IMR-90 (cell line): ENCODE measurements at regions of chr16 and their contacts with region 1.

Region 1: DNA sequence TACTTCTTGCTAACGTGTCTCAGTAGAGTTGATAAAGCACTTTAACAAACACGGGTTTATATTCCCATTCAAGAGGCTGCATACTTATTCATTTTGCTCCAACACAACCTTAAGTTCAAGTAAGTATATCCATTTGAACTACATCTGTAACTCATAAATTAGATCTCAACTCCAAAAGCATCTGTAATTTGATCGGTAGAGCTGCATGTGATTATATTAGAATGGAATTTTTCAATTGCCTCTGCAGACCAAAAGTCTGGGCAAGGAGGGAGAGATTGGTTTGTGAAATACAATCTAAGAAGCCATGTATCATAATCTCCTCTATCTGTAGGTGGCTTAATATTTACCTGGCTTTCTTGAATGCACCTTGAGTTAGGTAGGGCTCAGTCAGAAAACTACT is 371.0 kb downstream of the RBFOX1 start:
- DNase-seq: no peak
- ATAC-seq: no peak
- H3K4me3 ChIP-seq: no peak overlapping the region
- H3K27ac ChIP-seq: no peak overlapping the region
- H3K4me1 ChIP-seq: no peaks in the 10 kb centered on the region
- H3K27me3 ChIP-seq: no peaks in the 10 kb centered on the region
- CTCF ChIP-seq: no peak
- POLR2A ChIP-seq: no peak
- RAD21 ChIP-seq: no peak

Region 2: GRCh38 chr16:6573577-6573976 is 1130.1 kb before region 1 on chr16:
- CTCF ChIA-PET with region 1: no interaction called
- POLR2A ChIA-PET with region 1: no interaction called
- dilution Hi-C with region 1: no loop called
- in situ Hi-C with region 1: no loop called
- intact Hi-C with region 1: no loop called
- DNase-seq: no peak
- ATAC-seq: no peak
- H3K4me3 ChIP-seq: no peak overlapping the region
- H3K27ac ChIP-seq: no peak overlapping the region
- H3K4me1 ChIP-seq: no peaks in the 10 kb centered on the region
- H3K27me3 ChIP-seq: no peaks in the 10 kb centered on the region
- CTCF ChIP-seq: no peak
- POLR2A ChIP-seq: no peak
- RAD21 ChIP-seq: no peak

Region 3: DNA sequence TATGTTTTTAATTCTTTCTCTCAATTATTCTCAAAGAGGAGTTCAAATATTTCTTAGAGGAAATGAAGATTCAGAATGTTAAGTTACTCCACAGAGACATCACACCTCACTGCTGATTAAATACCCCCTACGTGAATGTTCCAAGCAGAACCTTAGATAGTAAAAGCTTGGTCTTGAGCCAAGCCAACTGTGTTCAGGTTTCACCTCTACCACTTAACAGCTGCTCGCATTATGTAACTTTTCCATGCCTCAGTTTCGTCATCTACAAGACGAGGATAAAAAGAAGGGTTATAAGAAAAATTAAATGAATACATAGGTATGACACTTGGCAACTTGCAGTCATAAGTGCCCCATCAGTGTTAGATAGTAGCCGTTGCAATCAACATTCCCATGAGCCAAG is 14.9 kb before region 1 on chr16:
- CTCF ChIA-PET with region 1: no interaction called
- POLR2A ChIA-PET with region 1: no interaction called
- dilution Hi-C with region 1: no loop called
- in situ Hi-C with region 1: no loop called
- intact Hi-C with region 1: no loop called
- DNase-seq: no peak
- ATAC-seq: no peak
- H3K4me3 ChIP-seq: no peak overlapping the region
- H3K27ac ChIP-seq: no peak overlapping the region
- H3K4me1 ChIP-seq: no peaks in the 10 kb centered on the region
- H3K27me3 ChIP-seq: no peaks in the 10 kb centered on the region
- CTCF ChIP-seq: no peak
- POLR2A ChIP-seq: no peak
- RAD21 ChIP-seq: no peak

Region 4: DNA sequence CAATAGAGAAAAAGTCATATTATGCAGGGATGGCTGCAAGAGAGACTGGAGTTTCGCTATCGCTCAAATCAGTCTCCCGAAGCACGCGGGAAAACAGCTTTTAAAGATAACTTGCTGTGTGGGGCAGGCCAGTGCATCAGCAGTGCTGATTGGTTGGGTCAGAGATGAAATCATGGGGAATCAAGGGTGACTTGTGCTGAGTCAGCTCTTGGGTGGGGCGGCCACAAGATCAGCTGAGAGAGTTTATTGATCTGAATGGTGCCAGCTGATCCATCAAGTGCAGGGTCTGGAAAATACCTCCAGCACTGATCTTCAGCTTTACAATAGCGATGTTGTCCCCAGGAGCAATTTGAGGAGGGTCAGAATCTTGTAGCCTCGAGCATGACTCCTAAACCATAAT is 59.4 kb after region 1 on chr16:
- CTCF ChIA-PET with region 1: no interaction called
- POLR2A ChIA-PET with region 1: no interaction called
- dilution Hi-C with region 1: no loop called
- in situ Hi-C with region 1: loop called (anchors 10 kb)
- intact Hi-C with region 1: no loop called
- DNase-seq: no peak
- ATAC-seq: no peak
- H3K4me3 ChIP-seq: no peak overlapping the region
- H3K27ac ChIP-seq: no peak overlapping the region
- H3K4me1 ChIP-seq: no peaks in the 10 kb centered on the region
- H3K27me3 ChIP-seq: no peaks in the 10 kb centered on the region
- CTCF ChIP-seq: no peak
- POLR2A ChIP-seq: no peak
- RAD21 ChIP-seq: no peak

Region 5: DNA sequence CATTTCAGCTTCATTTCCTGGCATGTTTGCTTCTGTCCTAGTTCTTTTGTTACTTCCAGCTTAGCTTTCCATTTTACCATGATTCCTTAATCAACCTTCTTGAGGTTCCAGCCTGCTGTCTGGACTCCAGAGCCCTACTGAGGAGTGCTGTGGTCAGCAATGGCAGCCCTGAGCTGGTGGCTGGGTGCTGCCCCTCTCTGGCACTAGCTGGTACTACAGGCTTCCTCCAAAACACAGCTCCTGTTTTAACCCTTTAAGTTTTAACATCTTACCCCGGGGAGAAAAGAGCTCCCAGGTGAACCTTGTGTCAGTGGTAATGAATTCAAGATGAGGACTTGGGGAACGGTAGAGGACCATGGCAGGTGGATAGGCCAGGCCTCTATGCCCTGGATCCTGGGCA is 491.1 kb after region 1 on chr16:
- CTCF ChIA-PET with region 1: no interaction called
- POLR2A ChIA-PET with region 1: no interaction called
- dilution Hi-C with region 1: no loop called
- in situ Hi-C with region 1: no loop called
- intact Hi-C with region 1: no loop called
- DNase-seq: no peak
- ATAC-seq: no peak
- H3K4me3 ChIP-seq: no peak overlapping the region
- H3K27ac ChIP-seq: no peak overlapping the region
- H3K4me1 ChIP-seq: no peaks in the 10 kb centered on the region
- H3K27me3 ChIP-seq: no peaks in the 10 kb centered on the region
- CTCF ChIP-seq: no peak
- POLR2A ChIP-seq: no peak
- RAD21 ChIP-seq: no peak